Right ventricle myocardium inferior (tissue), 1 donor: ENCODE measurements at regions of chr2 and their contacts with region 1.

Region 1: DNA sequence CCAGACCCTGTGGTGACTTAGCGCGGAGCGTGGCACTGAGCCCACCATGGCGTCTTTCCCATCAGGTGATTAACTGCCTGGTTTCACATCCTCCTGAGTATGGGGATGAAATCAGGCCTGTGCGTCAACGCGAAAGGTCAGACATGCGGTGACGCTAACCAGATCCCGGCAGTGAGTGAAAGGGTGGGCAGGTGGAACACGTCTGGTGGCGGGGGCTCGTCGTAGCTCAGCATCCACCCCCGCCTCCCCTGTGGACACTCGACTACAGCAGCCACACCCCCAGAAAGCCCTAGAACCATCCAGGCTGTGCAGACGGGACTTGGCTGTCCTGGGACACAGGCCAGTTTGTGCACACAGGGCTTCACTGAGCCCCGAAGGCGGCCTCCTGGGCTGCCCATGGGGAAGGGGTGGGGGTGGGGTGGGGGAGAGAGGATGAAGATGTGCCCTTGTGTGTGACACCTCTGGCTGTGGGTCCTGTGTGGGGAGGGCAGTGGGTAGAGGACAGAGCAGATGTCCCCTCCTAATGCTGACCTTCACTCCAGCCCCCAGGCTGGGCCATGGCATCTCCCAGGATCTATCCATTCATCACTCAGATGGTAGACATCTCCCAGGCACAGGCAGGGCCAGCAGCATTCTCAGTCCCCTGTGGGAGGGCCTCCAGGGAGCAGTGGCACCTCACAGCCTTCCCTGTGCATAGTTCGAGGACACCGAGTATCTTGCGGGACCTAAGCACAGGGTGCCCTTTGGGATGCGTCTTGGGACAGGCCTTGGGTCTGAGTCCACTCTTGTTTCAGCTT is 27.5 kb downstream of the RAMP1 start:
- DNase-seq: peak; percentile 80
- ATAC-seq: peak; percentile 85

Region 2: GRCh38 chr2:237864940-237865622 is 21.8 kb before region 1 on chr2:
- intact Hi-C with region 1: loop called (anchors 2 kb)
- DNase-seq: no peak
- ATAC-seq: peak; percentile 34